Breast epithelium (tissue), 4 donors: ENCODE measurements at regions of chr9 and their contacts with region 1.

Region 1: DNA sequence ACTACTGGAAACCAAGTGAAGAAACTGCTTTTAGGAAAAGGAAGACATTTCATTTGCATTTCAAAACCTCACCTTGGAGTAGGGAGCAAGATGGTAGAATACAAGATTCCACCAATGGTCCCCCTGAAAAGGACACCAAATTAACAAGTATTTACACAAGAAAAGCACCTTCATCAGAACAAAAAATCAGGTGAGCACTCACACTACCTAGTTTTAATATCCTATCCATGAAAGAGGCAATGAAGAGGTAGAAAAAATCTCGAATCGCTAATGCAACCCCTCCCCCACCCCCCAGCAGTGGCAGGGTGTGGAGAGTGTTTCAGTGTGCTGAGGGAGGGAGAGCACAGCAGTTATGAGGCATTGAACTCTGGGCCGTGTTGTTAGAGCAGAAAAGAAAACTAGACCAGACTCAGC is 1397.0 kb upstream of the C9orf72 start:
- DNase-seq: no peak
- H3K4me3 ChIP-seq: no peak overlapping the region
- H3K27ac ChIP-seq: no peak overlapping the region
- H3K4me1 ChIP-seq: no peaks in the 10 kb centered on the region
- H3K27me3 ChIP-seq: no peaks in the 10 kb centered on the region
- CTCF ChIP-seq: no peak
- POLR2A ChIP-seq: no peak

Region 2: DNA sequence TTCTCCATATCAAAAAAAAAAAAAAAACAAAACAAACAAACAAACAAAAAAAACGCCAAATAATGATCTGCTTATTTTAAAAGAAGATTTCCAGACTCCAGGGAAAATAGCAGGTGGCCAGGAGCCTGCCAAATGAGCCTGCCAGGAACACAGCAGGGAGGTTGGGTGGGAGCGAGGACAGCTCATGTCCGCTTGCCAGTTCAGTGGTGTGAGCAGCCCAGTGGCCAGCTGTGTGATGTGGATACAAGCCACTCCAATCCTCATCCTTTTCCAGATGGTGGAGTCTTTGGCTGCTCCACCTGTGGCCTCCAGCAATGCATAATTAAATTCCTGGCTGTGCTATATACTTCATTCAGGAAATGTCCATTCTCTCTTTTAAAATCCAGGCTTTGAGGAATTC is 371.8 kb before region 1 on chr9:
- intact Hi-C with region 1: no loop called
- DNase-seq: no peak
- H3K4me3 ChIP-seq: no peak overlapping the region
- H3K27ac ChIP-seq: no peak overlapping the region
- H3K4me1 ChIP-seq: no peaks in the 10 kb centered on the region
- H3K27me3 ChIP-seq: no peaks in the 10 kb centered on the region
- CTCF ChIP-seq: no peak
- POLR2A ChIP-seq: no peak

Region 3: GRCh38 chr9:28930766-28931165 is 39.5 kb before region 1 on chr9:
- intact Hi-C with region 1: loop called (anchors 5 kb)
- DNase-seq: no peak
- H3K4me3 ChIP-seq: no peak overlapping the region
- H3K27ac ChIP-seq: no peak overlapping the region
- H3K4me1 ChIP-seq: no peaks in the 10 kb centered on the region
- H3K27me3 ChIP-seq: no peaks in the 10 kb centered on the region
- CTCF ChIP-seq: no peak
- POLR2A ChIP-seq: no peak